MCF 10A (cell line): ENCODE measurements at regions of chr14 and their contacts with region 1.

Region 1: DNA sequence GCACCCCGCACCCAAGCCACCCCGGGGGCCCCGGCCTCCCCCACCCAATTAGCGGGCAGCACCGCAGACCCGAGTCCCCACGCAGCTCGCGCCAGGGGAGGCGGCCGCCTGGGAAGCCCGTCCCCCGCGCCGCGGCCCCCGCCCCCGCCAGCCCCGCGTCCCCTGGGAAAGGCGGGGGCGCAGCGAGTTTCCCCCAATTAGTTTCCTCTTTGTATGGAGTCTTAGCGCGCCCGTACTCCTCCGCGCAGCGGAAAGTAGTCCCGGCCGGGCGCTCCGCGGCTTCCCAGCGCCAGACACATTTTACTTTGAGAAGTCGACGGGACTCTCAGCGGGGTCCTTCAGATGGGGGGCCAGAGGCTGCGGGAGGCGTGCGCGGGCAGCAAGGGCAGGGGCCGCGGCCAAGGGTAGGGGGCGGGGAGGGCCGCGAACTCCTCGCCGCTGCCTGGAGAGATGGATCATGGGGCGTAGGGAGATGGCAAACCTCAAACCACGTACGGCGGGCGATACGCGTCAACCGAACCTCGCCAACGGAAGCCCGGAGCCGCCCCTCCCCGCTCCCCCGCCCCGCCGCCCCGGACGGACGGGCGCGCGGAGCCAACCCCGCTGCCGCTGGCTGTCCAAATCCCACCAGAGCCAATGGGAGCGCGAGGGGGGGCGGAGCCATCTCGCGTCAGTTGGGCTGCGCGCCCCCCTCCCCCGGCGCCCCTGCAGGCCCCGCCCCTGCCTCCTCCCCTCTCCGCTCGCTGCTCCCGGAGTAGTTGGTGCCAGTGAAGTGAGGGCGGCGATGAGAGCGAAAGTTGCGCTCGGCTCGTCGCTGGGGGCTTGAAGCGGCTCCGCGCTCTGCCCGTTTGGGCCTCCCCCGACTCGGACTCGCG is at the start of gene RCOR1:
- DNase-seq: peak; percentile 97
- H3K4me3 Mint-ChIP-seq: peak within 1 kb of the TSS; percentile 85
- H3K27ac Mint-ChIP-seq: peak within 1 kb of the TSS; percentile 85
- H3K4me1 Mint-ChIP-seq: peaks cover 29% of the 10 kb centered on the region
- H3K27me3 Mint-ChIP-seq: no peaks in the 10 kb centered on the region
- CTCF ChIP-seq: no peak
- total RNA-seq, gene RCOR1: 45.6 and 55.9 TPM in 2 replicates

Region 2: GRCh38 chr14:102551995-102552705 is 40.0 kb before region 1 on chr14:
- CTCF ChIA-PET with region 1: interaction called, 6 read pairs
- POLR2A ChIA-PET with region 1: interaction called, 13 read pairs
- intact Hi-C with region 1: loop called (anchors 2 kb)
- DNase-seq: peak; percentile 89
- H3K4me3 Mint-ChIP-seq: peak overlapping the region; percentile 69
- H3K27ac Mint-ChIP-seq: peak overlapping the region; percentile 95
- H3K4me1 Mint-ChIP-seq: peaks cover 6% of the 10 kb centered on the region
- H3K27me3 Mint-ChIP-seq: no peaks in the 10 kb centered on the region
- CTCF ChIP-seq: no peak

Region 3: DNA sequence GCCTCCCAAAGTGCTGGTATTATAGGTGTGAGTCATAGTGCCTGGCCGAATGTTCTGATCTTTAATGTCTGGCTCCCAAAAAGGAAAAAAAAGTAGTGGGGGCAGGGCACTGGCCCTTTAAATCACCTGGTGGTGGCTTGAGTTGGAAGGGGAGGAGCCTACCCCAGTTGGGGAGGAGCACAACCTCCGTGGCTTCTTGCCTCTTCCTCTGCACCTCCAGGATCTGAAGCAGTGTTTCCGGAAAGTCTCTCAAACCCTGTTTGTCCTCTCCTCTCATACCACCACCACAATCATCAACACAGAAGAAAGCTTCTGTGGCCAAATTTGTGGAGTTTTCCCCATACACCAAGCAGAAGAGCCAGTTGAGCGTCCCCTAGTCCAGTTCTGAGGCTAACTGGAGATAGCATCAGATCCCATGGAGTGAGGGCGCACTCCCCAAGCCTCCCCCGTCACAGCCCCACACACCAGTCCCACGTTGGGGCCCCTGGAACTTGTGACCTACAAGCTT is 24.0 kb before region 1 on chr14:
- CTCF ChIA-PET with region 1: interaction called, 5 read pairs
- POLR2A ChIA-PET with region 1: interaction called, 16 read pairs
- intact Hi-C with region 1: no loop called
- DNase-seq: peak; percentile 87
- H3K4me3 Mint-ChIP-seq: peak overlapping the region; percentile 62
- H3K27ac Mint-ChIP-seq: peak overlapping the region; percentile 93
- H3K4me1 Mint-ChIP-seq: peaks cover 11% of the 10 kb centered on the region
- H3K27me3 Mint-ChIP-seq: no peaks in the 10 kb centered on the region
- CTCF ChIP-seq: no peak

Region 4: DNA sequence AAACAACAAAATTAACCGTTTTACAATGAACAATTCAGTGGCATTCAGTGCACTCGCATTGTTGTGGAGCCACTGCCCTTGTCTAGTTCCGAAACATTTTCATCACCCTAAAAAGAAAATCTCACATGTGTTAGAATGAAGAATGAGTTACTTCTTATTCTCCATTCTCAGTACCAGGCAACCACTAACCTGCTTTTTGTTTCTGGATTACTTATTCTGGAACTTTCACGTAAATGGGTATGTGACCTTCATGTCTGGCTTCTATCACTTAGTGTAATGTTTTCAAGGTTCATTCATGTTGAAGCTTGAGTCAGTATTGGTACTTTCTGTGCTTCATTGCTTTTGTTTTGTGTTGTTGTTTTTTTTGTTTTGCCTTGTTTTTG is 15.9 kb after region 1 on chr14:
- CTCF ChIA-PET with region 1: interaction called, 33 read pairs
- POLR2A ChIA-PET with region 1: interaction called, 49 read pairs
- intact Hi-C with region 1: no loop called
- DNase-seq: no peak
- H3K4me3 Mint-ChIP-seq: no peak overlapping the region
- H3K27ac Mint-ChIP-seq: no peak overlapping the region
- H3K4me1 Mint-ChIP-seq: peaks cover 21% of the 10 kb centered on the region
- H3K27me3 Mint-ChIP-seq: no peaks in the 10 kb centered on the region
- CTCF ChIP-seq: no peak

Region 5: DNA sequence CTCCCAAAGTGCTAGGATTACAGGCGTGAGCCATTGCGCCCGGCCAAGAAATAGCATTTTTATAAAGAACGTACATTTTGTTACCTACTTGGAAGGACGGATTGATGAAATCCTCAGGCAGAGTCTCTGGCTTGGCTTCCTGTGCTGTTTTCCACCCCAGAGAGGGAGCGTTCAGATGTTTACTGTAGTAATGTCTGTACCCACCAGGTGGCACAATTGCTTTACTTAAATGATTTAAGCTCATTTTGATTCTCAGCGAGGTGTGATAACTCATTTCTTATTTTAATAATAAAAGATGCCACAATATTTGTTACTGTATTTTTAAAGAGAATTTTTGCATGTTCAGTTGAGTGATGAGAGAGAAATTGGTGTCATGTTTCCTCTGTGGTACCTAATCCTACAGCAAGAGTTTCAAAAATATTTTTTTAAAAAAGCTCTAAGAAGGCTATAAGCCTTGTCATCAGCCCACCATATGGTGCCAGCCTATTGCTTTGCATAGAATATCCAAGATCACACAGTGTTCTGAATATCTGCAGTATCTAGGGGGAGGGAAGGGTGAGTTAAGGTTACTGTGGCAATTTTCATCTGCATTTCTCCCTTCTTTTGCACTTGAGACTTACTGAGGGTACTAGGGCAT is 102.5 kb after region 1 on chr14:
- CTCF ChIA-PET with region 1: interaction called, 12 read pairs
- POLR2A ChIA-PET with region 1: interaction called, 10 read pairs
- intact Hi-C with region 1: loop called (anchors 2 kb)
- DNase-seq: peak; percentile 76
- H3K4me3 Mint-ChIP-seq: no peak overlapping the region
- H3K27ac Mint-ChIP-seq: no peak overlapping the region
- H3K4me1 Mint-ChIP-seq: peaks cover 27% of the 10 kb centered on the region
- H3K27me3 Mint-ChIP-seq: no peaks in the 10 kb centered on the region
- CTCF ChIP-seq: peak; percentile 54

Region 6: DNA sequence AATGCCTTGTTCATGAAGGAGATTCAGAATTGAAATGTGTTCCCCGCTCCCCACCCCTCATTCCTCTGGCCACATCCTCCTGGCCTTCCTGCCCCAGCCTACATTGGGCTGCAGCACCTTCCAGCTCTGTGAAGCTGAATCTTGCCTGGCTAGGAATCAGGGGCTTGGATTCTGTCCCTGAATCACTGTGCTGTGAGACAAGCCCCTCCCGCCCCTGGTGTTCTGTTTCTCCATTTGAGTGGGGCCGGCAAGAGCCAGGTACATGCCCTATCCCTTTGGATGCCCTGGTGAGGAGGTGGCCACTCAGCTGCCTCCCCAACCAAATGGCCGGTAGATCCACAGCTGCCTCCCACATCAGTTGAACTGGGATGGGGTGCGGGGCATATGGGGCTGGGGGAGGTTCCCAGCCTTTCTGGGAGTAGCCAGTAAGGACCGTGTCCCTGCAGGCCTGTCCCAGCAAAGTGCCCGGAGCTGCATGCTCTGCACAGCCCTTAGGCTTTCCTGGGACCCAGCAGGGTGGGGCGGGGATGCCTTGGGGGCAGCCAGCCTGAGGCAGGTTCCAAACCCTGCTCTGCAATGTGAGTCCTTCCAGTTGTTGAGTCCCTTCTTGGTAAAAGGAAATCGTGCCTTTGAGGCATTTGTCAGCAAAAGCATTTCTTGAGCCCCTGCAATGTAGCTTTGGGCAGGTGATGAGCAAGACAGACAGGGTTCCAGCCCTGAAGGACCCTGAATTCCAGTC is 146.8 kb after region 1 on chr14:
- CTCF ChIA-PET with region 1: no interaction called
- POLR2A ChIA-PET with region 1: no interaction called
- intact Hi-C with region 1: no loop called
- DNase-seq: no peak
- H3K4me3 Mint-ChIP-seq: no peak overlapping the region
- H3K27ac Mint-ChIP-seq: no peak overlapping the region
- H3K4me1 Mint-ChIP-seq: no peaks in the 10 kb centered on the region
- H3K27me3 Mint-ChIP-seq: no peaks in the 10 kb centered on the region
- CTCF ChIP-seq: no peak